Activated CD8-positive, alpha-beta memory T cell treated with anti-CD3 and anti-CD28 coated beads, Interleukin-2, amount 10 ng/mL, durations not matched to agents 7 days and 5 days (primary cell): ENCODE measurements at regions of chr14 and their contacts with region 1.

Region 1: DNA sequence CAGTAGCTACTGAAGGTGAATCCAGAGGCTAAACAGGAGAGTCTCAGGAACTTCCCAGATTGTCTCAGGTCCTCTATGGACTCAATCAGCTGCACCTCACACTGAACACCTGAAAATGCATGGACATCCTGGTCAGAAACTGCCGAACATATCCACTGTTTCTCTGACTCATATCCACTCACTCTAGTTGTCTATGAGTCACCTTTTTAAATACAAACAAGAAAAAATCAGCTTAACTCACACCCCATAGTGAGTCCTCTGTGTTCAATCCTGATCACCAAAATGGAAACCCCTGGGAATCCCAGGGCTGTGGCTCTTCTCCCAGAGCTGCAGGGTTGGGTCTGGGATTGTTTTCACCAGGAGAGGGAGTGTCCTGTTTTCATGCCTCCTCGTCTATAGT is 556.7 kb downstream of the TMEM121 start:
- DNase-seq: no peak
- ATAC-seq: no peak
- H3K4me3 Mint-ChIP-seq: no peak overlapping the region
- H3K27ac Mint-ChIP-seq: no peak overlapping the region
- H3K4me1 Mint-ChIP-seq: peaks cover 21% of the 10 kb centered on the region
- H3K27me3 Mint-ChIP-seq: peaks cover 47% of the 10 kb centered on the region

Region 2: GRCh38 chr14:105974902-105975301 is 108.2 kb before region 1 on chr14:
- CTCF ChIA-PET with region 1: no interaction called
- DNase-seq: peak; percentile 81
- ATAC-seq: peak; percentile 95
- H3K4me3 Mint-ChIP-seq: no peak overlapping the region
- H3K27ac Mint-ChIP-seq: no peak overlapping the region
- H3K4me1 Mint-ChIP-seq: no peaks in the 10 kb centered on the region
- H3K27me3 Mint-ChIP-seq: peaks cover 13% of the 10 kb centered on the region

Region 3: DNA sequence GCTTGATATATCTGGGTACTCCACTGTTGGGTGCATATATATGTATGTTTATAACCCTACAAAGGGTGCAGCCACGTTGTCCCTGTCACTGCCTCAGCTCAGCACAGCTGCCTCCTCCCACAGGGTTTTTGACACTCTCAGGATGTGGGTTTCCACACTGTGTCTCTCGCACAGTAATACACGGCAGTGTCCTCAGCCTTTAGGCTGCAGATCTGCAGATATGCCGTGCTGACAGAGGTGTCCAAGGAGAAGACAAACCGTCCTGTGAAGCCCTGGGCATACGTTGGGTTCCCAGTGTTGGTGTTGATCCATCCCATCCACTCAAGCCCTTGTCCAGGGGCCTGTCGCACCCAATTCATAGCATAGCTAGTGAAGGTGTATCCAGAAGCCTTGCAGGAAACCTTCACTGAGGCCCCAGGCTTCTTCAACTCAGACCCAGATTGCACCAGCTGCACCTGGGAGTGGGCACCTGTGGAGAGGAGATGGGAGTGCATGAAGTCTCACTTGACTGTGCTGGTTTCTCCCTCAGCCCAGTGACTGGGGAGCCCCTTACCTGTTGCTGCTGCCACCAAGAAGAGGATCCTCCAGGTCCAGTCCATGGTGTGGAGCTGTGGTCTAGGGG is 58.0 kb before region 1 on chr14:
- CTCF ChIA-PET with region 1: no interaction called
- DNase-seq: peak; percentile 75
- ATAC-seq: peak; percentile 93
- H3K4me3 Mint-ChIP-seq: no peak overlapping the region
- H3K27ac Mint-ChIP-seq: no peak overlapping the region
- H3K4me1 Mint-ChIP-seq: peaks cover 34% of the 10 kb centered on the region
- H3K27me3 Mint-ChIP-seq: peaks cover 40% of the 10 kb centered on the region

Region 4: DNA sequence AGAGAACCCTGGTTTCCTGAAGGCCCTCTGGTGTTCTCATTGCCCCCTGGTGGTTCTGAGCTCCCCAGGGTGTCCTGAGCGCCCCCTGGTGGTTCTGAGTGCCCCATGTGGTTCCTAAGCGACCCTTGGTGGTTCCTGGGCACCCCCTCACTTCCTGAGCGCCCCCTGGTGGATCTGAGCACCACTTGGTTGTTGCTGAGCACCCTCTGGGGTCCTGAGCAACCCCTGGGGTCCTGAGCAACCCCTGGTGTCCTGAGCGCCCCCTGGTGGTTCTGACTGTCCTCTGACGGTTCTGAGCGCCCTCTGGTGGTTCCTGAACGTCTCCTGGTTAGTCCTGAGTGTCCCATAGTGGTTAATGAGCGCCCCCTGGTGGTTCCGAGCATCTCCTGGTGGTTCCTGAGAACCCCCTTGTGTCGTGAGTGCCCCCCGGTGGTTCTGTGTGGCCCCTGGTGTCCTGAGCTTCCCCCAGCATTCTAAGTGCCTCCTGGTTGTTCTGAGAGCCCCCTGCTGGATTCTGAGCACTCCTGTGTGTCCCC is 11.6 kb after region 1 on chr14:
- CTCF ChIA-PET with region 1: interaction called, 35 read pairs
- DNase-seq: peak; percentile 91
- ATAC-seq: peak; percentile 84
- H3K4me3 Mint-ChIP-seq: no peak overlapping the region
- H3K27ac Mint-ChIP-seq: no peak overlapping the region
- H3K4me1 Mint-ChIP-seq: no peaks in the 10 kb centered on the region
- H3K27me3 Mint-ChIP-seq: peaks cover 36% of the 10 kb centered on the region

Region 5: GRCh38 chr14:106129274-106129673 is 46.2 kb after region 1 on chr14:
- CTCF ChIA-PET with region 1: no interaction called
- DNase-seq: no peak
- ATAC-seq: no peak
- H3K4me3 Mint-ChIP-seq: no peak overlapping the region
- H3K27ac Mint-ChIP-seq: no peak overlapping the region
- H3K4me1 Mint-ChIP-seq: peaks cover 15% of the 10 kb centered on the region
- H3K27me3 Mint-ChIP-seq: peaks cover 59% of the 10 kb centered on the region

Region 6: DNA sequence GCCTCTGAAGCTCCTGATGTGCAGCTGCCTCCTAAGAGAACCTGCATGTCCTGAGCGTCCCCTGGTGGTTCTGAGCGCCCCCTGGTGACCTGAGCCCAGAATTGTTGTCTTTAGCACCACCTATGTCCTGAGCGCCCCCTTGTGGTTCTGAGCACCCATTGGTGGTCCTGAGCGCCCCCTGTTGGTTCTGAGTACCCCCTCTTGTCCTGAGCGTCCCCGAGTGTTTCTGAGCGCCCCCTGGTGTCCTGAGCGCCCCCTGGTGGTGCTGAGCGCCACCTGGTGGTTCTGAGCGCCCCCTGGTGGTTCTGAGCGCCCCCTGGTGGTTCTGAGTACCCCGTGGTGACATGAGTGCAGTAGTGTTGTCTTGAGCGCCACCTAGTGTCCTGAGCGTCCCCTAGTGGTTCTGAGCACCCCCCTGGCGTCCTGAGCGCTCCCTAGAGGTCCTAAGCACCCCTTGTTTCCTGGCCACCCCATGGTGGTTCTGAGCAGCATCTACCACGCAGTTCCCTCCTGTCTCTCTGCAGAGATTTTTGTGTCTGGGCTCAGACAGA is 225.8 kb after region 1 on chr14:
- CTCF ChIA-PET with region 1: no interaction called
- DNase-seq: peak; percentile 94
- ATAC-seq: peak; percentile 95
- H3K4me3 Mint-ChIP-seq: no peak overlapping the region
- H3K27ac Mint-ChIP-seq: no peak overlapping the region
- H3K4me1 Mint-ChIP-seq: no peaks in the 10 kb centered on the region
- H3K27me3 Mint-ChIP-seq: peaks cover 61% of the 10 kb centered on the region